Astrocyte of the cerebellum (primary cell): ENCODE measurements at regions of chr1 and their contacts with region 1.

Region 1: DNA sequence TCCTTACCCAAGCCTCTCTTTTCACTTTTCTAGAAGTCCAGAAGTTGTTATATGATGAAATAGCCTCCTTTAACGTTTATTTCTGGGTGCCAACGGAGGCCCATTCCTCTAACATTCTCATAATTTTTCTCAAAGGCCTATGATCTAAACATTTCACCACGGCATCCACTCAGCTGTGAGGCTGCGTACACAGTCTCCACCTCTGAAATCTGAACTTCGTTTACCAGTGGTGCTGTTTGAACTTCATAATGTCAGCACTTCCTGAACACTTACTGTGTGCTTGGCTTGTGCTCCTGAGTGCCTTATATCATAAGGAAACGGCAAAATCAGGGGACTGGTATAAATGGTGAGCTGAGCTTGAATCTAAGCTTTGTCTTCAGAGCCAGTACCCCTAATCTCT is 12.0 kb upstream of the RBP7 start:
- DNase-seq: no peak
- H3K4me3 ChIP-seq: no peak overlapping the region
- CTCF ChIP-seq: no peak

Region 2: DNA sequence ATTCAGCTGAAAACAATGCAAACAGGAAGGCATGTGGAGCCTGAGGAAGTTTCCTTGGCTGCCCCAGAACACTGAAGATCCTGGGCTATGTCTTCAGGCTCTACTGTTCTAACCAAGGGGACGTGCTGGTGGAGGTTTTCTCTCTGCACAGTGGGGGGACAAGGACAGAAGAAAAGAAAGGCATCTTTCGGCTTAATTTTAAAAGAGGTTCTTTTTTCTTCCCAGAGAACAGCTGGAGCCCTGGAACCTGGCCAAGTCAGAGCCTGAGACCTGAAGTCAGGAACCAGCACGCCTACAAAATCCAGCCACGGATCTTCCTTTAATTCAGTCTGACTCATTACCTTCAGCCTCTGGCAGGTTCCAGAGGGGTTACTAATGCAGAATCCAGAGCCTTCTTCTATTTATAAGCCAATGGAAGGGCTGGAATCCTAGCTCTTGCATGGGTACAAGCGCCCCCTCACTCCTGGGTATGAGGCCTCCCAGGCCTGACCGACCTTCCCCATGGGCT is 94.7 kb before region 1 on chr1:
- in situ Hi-C with region 1: loop called (anchors 5 kb)
- DNase-seq: peak; percentile 89
- H3K4me3 ChIP-seq: no peak overlapping the region
- CTCF ChIP-seq: no peak